ENCODE measurements at regions of chr1 and their contacts with region 1.

Region 1: DNA sequence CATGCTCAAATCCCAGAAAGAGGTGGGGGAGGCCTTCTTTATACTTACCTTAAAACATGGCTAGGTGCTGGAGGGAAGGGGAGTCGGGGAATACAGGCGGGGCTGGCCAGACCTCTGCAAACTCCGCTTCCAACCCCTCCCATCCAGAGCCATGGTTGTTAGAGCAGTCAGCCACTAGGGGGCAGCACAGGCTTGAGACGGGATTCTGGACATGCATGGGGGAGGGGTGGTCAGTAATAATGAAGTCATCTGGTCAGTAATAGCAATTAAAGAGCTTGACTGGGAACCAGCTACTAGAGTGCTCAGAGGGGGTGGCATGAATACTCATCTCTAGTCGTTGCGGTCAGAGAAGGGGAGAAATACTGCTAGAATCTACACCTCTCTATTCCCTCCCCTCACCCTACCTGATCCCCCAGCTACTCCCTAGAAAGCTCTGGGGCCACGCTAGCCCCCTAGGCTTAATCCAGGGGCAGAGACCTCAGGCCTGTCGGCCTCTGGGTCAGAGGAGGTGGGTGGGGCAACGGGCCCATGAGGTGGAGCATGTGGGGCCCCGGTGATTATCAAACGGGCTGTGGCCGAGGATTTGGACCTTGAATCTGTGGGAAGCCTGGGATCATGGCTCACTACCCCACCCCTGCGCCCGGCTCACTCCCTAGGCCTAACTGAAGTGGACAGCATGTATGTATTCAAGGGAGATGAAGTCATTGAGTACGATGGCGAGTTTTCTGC is 2.9 kb downstream of the CASQ1 start:
- DNase-seq: peak; percentile 93
- H3K4me3 Mint-ChIP-seq: no peak overlapping the region
- H3K27ac Mint-ChIP-seq: no peak overlapping the region
- H3K4me1 Mint-ChIP-seq: no peaks in the 10 kb centered on the region
- H3K27me3 Mint-ChIP-seq: peaks cover 17% of the 10 kb centered on the region
- CTCF ChIP-seq: peak; percentile 93

Region 2: DNA sequence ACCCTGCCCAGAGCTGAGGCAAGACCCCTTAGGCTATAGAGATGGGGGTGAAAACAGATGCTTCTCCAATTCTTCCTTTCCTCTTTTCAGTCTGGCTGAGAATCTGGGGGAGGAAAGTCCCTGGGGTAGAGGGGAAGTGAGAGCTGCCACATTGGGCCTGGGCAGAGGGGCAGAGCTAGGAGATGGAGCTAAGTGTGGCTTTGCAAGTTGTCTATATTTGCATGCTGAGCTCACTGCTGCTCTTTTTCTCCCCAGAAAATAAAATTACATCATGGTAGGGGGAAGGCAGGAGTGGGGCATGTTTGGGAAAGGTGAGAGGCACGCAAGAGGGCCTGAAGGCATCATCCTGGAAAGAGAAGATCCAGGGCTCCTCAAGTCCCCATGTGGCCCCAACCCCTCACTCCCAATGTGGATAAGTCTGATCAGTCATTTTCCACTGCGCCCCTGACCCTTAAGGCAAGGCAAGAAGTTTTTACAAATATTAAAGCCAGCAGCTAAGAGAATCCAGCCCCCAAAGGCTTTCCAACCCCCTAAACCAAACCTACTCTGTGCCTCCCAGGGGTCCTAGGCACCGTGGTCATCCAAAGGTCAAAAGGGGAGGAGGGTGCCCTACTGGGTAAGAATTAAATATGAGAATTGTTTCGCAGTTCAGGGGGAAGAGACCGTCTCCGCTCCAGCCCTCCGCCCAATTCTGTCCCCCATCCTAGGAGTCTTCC is 11.4 kb after region 1 on chr1:
- CTCF ChIA-PET with region 1: interaction called, 14 read pairs
- intact Hi-C with region 1: no loop called
- DNase-seq: no peak
- H3K4me3 Mint-ChIP-seq: peak overlapping the region; percentile 80
- H3K27ac Mint-ChIP-seq: peak overlapping the region; percentile 67
- H3K4me1 Mint-ChIP-seq: peaks cover 36% of the 10 kb centered on the region
- H3K27me3 Mint-ChIP-seq: peaks cover 10% of the 10 kb centered on the region
- CTCF ChIP-seq: no peak

Region 3: GRCh38 chr1:160219062-160219929 is 26.0 kb after region 1 on chr1:
- CTCF ChIA-PET with region 1: interaction called, 92 read pairs
- intact Hi-C with region 1: loop called (anchors 1 kb)
- DNase-seq: peak; percentile 60
- H3K4me3 Mint-ChIP-seq: no peak overlapping the region
- H3K27ac Mint-ChIP-seq: no peak overlapping the region
- H3K4me1 Mint-ChIP-seq: no peaks in the 10 kb centered on the region
- H3K27me3 Mint-ChIP-seq: no peaks in the 10 kb centered on the region
- CTCF ChIP-seq: peak; percentile 36

Region 4: GRCh38 chr1:160251687-160252526 is 58.7 kb after region 1 on chr1:
- CTCF ChIA-PET with region 1: interaction called, 54 read pairs
- intact Hi-C with region 1: loop called (anchors 1 kb)
- DNase-seq: peak; percentile 61
- H3K4me3 Mint-ChIP-seq: no peak overlapping the region
- H3K27ac Mint-ChIP-seq: no peak overlapping the region
- H3K4me1 Mint-ChIP-seq: peaks cover 7% of the 10 kb centered on the region
- H3K27me3 Mint-ChIP-seq: no peaks in the 10 kb centered on the region
- CTCF ChIP-seq: peak; percentile 70

Region 5: GRCh38 chr1:160291248-160292220 is 98.3 kb after region 1 on chr1:
- CTCF ChIA-PET with region 1: interaction called, 46 read pairs
- intact Hi-C with region 1: loop called (anchors 1 kb)
- DNase-seq: peak; percentile 75
- H3K4me3 Mint-ChIP-seq: no peak overlapping the region
- H3K27ac Mint-ChIP-seq: no peak overlapping the region
- H3K4me1 Mint-ChIP-seq: peaks cover 6% of the 10 kb centered on the region
- H3K27me3 Mint-ChIP-seq: no peaks in the 10 kb centered on the region
- CTCF ChIP-seq: peak; percentile 85

Region 6: GRCh38 chr1:160376525-160377131 is 183.4 kb after region 1 on chr1:
- CTCF ChIA-PET with region 1: interaction called, 18 read pairs
- intact Hi-C with region 1: loop called (anchors 2 kb)
- DNase-seq: peak; percentile 55
- H3K4me3 Mint-ChIP-seq: no peak overlapping the region
- H3K27ac Mint-ChIP-seq: no peak overlapping the region
- H3K4me1 Mint-ChIP-seq: peaks cover 17% of the 10 kb centered on the region
- H3K27me3 Mint-ChIP-seq: peaks cover 24% of the 10 kb centered on the region
- CTCF ChIP-seq: peak; percentile 79

Region 7: GRCh38 chr1:160416369-160416768 is 223.1 kb after region 1 on chr1:
- CTCF ChIA-PET with region 1: no interaction called
- intact Hi-C with region 1: loop called (anchors 1 kb)
- DNase-seq: peak; percentile 60
- H3K4me3 Mint-ChIP-seq: no peak overlapping the region
- H3K27ac Mint-ChIP-seq: no peak overlapping the region
- H3K4me1 Mint-ChIP-seq: no peaks in the 10 kb centered on the region
- H3K27me3 Mint-ChIP-seq: peaks cover 72% of the 10 kb centered on the region
- CTCF ChIP-seq: peak; percentile 13

Measured in Calu3 (cell line).